CD4-positive, alpha-beta memory T cell (primary cell): ENCODE measurements at regions of chr1 and their contacts with region 1.

Region 1: GRCh38 chr1:228804671-228805413 is 69.6 kb downstream of the RHOU start:
- DNase-seq: peak in 3 of 5 donors; percentile 6 to 19 (median 8)
- H3K4me3 ChIP-seq: peak overlapping the region in 1 of 2 donors; percentile 23
- H3K4me3 Mint-ChIP-seq: peak overlapping the region; percentile 67 to 85 (median 82)
- H3K27ac ChIP-seq: peak overlapping the region; percentile 27
- H3K27ac Mint-ChIP-seq: peak overlapping the region; percentile 77 to 93 (median 83)
- H3K4me1 ChIP-seq: peaks cover 22% of the 10 kb centered on the region
- H3K4me1 Mint-ChIP-seq: peaks cover 30 to 46% (median 37%) of the 10 kb centered on the region in 4 donors
- H3K27me3 ChIP-seq: no peaks in the 10 kb centered on the region
- H3K27me3 Mint-ChIP-seq: no peaks in the 10 kb centered on the region

Region 2: DNA sequence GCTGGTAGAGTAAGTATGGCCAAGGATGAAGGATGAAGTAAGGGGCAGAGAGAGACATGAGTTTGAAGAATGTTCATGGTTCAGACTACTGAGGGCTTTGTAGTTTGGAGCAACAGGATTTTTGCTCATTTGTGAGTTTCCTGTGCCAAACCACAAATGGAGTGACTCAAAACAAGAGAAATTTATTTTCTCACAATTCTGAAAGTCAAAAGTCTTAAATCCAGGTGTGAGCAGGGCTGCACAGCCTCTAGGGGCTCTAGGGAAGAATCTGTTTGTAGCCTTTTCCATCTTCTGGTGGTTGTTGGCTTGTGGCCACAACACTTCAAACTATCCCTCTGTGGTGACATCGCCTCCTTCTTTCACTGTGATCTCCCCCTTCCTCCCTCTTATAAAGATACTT is 10.7 kb before region 1 on chr1:
- CTCF ChIA-PET with region 1: interaction called, 4 read pairs
- POLR2A ChIA-PET with region 1: interaction called, 12 read pairs
- intact Hi-C with region 1: no loop called
- DNase-seq: peak in 4 of 5 donors; percentile 18 to 42 (median 28)
- H3K4me3 ChIP-seq: peak overlapping the region in 1 of 2 donors; percentile 13
- H3K4me3 Mint-ChIP-seq: no peak overlapping the region
- H3K27ac ChIP-seq: no peak overlapping the region
- H3K27ac Mint-ChIP-seq: no peak overlapping the region
- H3K4me1 ChIP-seq: peaks cover 55% of the 10 kb centered on the region
- H3K4me1 Mint-ChIP-seq: peaks cover 13 to 21% (median 16%) of the 10 kb centered on the region in 4 donors
- H3K27me3 ChIP-seq: no peaks in the 10 kb centered on the region
- H3K27me3 Mint-ChIP-seq: no peaks in the 10 kb centered on the region

Region 3: DNA sequence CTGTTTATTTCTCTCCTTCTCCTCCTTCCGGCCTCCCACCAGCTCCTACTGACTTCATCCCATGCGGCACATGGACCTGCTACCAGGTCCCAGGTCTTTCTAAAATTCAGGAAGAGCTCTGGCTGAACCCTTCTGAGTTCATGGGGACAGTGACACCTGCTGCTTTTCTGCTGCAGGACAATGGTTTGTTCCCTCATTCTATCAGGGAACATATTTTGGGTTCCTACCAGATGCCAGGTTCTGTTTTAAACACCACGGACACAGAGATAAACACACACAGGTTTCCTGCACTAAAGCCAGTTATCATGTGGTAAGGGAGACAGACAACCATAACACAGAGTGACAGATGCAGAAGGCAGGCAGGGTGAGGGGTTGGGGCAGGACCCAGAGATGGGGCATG is 352.0 kb after region 1 on chr1:
- CTCF ChIA-PET with region 1: no interaction called
- POLR2A ChIA-PET with region 1: no interaction called
- intact Hi-C with region 1: no loop called
- DNase-seq: no peak
- H3K4me3 ChIP-seq: no peak overlapping the region
- H3K4me3 Mint-ChIP-seq: peak overlapping the region in 3 of 8 donors; percentile 25 to 40 (median 31)
- H3K27ac ChIP-seq: no peak overlapping the region
- H3K27ac Mint-ChIP-seq: peak overlapping the region in 3 of 7 donors; percentile 36 to 81 (median 55)
- H3K4me1 ChIP-seq: peaks cover 27% of the 10 kb centered on the region
- H3K4me1 Mint-ChIP-seq: peaks cover 16 to 41% (median 34%) of the 10 kb centered on the region in 4 donors
- H3K27me3 ChIP-seq: no peaks in the 10 kb centered on the region
- H3K27me3 Mint-ChIP-seq: no peaks in the 10 kb centered on the region